ENCODE measurements at regions of chr6 and their contacts with region 1.

Region 1: DNA sequence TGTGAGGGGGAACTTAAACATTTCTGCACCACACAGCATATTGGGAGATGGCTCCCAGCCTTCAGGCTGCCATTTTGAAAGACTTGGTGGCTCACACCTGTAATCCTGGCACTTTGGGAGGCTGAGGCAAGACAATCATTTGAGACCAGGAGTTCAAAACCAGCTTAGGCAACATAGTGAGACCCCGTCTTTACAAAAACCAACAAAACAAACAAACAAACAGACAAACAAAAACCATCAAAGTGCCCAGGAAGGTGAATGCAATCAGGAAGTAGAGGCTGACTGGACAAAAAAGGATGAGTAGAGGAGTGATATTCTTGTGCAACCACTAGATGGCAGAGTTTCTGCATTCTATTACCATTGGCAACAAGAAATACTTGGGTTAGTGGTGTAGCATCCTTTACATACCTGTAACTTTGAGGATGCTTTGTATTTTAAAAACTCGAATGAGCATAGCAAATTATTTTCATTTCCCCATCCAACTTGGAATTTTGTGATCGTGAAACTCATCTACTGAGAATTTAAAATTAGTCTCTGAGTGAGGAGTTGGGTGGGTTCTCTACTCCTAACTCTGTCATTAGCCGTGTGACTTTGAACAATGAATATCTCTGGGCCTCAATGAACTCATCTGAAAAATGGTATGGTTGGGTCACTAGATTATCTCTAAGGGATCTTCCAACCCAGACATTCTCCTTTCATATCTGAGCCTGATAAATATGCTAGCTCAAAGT is 84.4 kb downstream of the CRYBG1 start:
- DNase-seq: no peak
- ATAC-seq: peak; percentile 43
- H3K4me3 Mint-ChIP-seq: no peak overlapping the region
- H3K27ac Mint-ChIP-seq: no peak overlapping the region
- H3K4me1 Mint-ChIP-seq: peaks cover 16% of the 10 kb centered on the region
- H3K27me3 Mint-ChIP-seq: peaks cover 18% of the 10 kb centered on the region
- CTCF ChIP-seq: peak; percentile 25

Region 2: GRCh38 chr6:106069478-106069877 is 375.5 kb before region 1 on chr6:
- CTCF ChIA-PET with region 1: no interaction called
- POLR2A ChIA-PET with region 1: no interaction called
- intact Hi-C with region 1: no loop called
- DNase-seq: no peak
- ATAC-seq: no peak
- H3K4me3 Mint-ChIP-seq: no peak overlapping the region
- H3K27ac Mint-ChIP-seq: no peak overlapping the region
- H3K4me1 Mint-ChIP-seq: peaks cover 5% of the 10 kb centered on the region
- H3K27me3 Mint-ChIP-seq: peaks cover 4% of the 10 kb centered on the region
- CTCF ChIP-seq: no peak

Region 3: GRCh38 chr6:106339334-106340029 is 105.5 kb before region 1 on chr6:
- CTCF ChIA-PET with region 1: interaction called, 6 read pairs
- POLR2A ChIA-PET with region 1: no interaction called
- intact Hi-C with region 1: loop called (anchors 1 kb)
- DNase-seq: no peak
- ATAC-seq: peak; percentile 79
- H3K4me3 Mint-ChIP-seq: peak overlapping the region; percentile 59
- H3K27ac Mint-ChIP-seq: no peak overlapping the region
- H3K4me1 Mint-ChIP-seq: peaks cover 7% of the 10 kb centered on the region
- H3K27me3 Mint-ChIP-seq: peaks cover 17% of the 10 kb centered on the region
- CTCF ChIP-seq: no peak

Region 4: DNA sequence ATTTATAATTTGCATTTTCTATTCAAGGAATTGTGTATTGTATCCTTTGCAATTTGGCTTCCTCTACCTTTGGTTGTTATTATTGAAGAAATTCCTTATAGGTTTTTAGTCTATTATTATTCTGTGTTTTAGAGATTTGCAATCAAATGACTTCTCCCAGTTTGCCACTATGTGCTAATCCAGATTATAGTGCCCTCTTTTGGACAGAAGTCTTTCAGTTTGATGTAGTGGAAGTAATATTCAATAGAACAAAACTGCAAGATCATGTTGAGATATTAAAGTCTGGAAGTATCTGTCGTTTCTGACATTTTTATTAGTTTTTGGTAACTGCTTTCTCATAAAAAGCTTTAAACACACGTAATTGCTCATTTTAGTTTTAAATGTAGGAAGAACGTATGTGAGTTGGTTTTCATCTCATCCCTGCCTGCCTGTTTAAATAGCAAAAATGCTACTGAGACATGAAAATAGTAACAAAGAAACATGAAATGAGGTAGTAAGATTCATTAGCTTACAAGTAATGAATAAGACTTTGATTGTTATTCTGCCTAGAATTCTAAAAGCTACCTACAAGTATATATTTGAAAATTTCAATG is 111.5 kb after region 1 on chr6:
- CTCF ChIA-PET with region 1: interaction called, 63 read pairs
- POLR2A ChIA-PET with region 1: interaction called, 3 read pairs
- intact Hi-C with region 1: loop called (anchors 1 kb)
- DNase-seq: no peak
- ATAC-seq: peak; percentile 31
- H3K4me3 Mint-ChIP-seq: no peak overlapping the region
- H3K27ac Mint-ChIP-seq: peak overlapping the region; percentile 13
- H3K4me1 Mint-ChIP-seq: peaks cover 22% of the 10 kb centered on the region
- H3K27me3 Mint-ChIP-seq: no peaks in the 10 kb centered on the region
- CTCF ChIP-seq: no peak

Region 5: DNA sequence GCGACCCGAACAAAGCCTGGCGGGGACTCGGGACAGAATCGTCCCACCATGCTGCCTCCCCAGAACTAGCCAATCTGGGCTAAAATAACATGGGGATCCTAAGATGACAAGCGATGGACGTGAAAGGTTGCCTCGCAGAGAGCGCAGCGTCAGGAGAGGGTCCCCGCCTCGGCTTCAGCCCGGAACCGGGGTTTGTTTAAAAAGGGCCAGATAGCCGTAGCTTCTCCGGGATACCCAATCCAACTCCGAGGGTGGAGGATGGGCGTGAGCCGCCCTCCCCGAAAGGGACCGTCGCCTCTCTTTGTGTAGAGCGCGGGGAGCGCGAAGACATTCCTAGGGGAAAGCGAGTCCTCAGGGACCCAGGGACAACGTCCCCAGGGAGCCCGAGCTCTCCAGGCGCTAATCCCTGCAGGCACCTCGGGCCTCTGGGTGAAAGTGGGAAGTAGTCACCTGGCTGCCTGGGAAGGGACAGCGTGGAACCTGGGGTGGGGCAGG is 528.9 kb after region 1 on chr6:
- CTCF ChIA-PET with region 1: interaction called, 41 read pairs
- POLR2A ChIA-PET with region 1: interaction called, 5 read pairs
- intact Hi-C with region 1: loop called (anchors 1 kb)
- DNase-seq: no peak
- ATAC-seq: peak; percentile 10
- H3K4me3 Mint-ChIP-seq: peak overlapping the region; percentile 93
- H3K27ac Mint-ChIP-seq: peak overlapping the region; percentile 85
- H3K4me1 Mint-ChIP-seq: peaks cover 39% of the 10 kb centered on the region
- H3K27me3 Mint-ChIP-seq: no peaks in the 10 kb centered on the region
- CTCF ChIP-seq: no peak

Region 6: DNA sequence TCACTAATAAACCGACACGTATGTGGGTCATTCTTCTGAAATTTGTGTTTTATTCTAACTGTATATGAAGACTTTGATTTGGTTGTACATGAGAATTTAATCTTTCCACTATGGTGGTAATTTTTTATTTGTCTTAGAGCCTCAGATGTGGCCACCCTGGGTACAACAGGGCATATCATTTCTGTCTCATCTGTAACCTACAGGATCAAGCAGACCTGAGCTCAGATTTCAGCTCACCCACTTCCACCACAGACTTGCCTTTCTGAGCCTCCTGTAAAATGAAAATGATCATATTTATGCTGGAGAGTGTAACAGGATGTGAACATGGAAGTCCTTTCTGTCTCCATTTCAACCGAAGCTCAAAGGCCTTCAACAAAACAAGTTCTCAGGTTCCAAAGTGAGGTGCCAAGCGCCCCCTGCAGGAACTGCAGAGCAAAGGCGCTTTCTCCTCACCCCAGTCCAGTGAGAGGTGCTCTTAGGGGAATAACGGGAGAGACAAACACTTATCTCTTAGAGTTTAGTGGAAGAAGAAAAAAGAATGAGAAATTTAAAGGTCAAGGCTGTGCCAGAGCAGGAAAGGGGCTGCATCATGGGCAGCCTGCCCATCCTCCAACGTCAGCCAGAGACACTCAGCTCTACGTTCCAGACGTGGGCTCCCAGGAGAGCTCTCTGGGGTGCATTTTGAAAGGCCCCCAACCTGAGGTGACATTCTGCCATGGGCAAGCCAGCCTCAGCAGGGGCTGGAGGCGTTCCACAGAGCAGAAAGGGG is 552.6 kb after region 1 on chr6:
- CTCF ChIA-PET with region 1: interaction called, 14 read pairs
- POLR2A ChIA-PET with region 1: no interaction called
- intact Hi-C with region 1: loop called (anchors 1 kb)
- DNase-seq: peak; percentile 34
- ATAC-seq: peak; percentile 73
- H3K4me3 Mint-ChIP-seq: no peak overlapping the region
- H3K27ac Mint-ChIP-seq: no peak overlapping the region
- H3K4me1 Mint-ChIP-seq: peaks cover 2% of the 10 kb centered on the region
- H3K27me3 Mint-ChIP-seq: no peaks in the 10 kb centered on the region
- CTCF ChIP-seq: peak; percentile 31